Activated T-helper 2 cell treated with anti-CD3 and anti-CD28 coated beads, Interferon-gamma antibody, Interleukin-2, Interleukin-4, amounts not matched to agents 10 μg/mL and 5 μg/mL and 100 μg/mL, durations not matched to agents 14 hours and 24 hours and 36 hours (primary cell): ENCODE measurements at regions of chr20 and their contacts with region 1.

Region 1: DNA sequence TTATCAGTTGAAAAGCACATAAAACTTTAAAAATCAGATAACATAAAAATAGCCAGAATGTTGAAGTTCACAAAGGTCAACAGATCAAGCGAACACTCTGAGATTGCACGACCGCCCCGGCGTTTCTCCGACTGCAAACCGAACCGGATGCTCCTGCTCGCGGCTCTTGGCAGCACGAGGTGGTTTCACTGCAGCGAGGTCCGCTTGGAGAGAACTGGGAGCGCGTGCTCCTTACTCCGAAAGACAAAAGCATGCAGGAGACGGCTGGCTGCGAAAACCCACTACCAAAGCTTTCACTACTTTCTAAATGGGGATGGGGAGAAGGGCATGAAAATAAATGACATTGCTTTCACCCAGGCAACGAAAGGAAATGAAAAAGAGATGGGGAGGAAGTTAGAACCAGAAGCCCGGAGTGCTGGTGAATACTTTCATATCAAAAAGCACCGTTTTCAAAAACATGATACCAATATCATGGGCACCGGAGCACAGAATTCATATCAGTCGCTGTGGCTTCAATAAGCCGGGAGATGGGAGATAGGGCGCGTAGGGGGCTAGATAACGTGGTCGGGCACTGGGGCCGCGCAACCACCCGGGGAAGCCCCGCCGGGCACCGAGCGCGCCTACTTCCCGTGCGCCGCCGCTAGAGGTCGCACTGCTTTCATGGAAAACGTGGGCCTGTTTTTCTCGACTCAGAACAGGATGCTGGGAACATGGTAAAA is 8.3 kb upstream of the ANKRD60 start:
- DNase-seq: peak; percentile 78
- H3K4me3 Mint-ChIP-seq: peak overlapping the region; percentile 88
- H3K27ac Mint-ChIP-seq: peak overlapping the region; percentile 94
- H3K4me1 Mint-ChIP-seq: peaks cover 41% of the 10 kb centered on the region
- H3K27me3 Mint-ChIP-seq: no peaks in the 10 kb centered on the region

Region 2: DNA sequence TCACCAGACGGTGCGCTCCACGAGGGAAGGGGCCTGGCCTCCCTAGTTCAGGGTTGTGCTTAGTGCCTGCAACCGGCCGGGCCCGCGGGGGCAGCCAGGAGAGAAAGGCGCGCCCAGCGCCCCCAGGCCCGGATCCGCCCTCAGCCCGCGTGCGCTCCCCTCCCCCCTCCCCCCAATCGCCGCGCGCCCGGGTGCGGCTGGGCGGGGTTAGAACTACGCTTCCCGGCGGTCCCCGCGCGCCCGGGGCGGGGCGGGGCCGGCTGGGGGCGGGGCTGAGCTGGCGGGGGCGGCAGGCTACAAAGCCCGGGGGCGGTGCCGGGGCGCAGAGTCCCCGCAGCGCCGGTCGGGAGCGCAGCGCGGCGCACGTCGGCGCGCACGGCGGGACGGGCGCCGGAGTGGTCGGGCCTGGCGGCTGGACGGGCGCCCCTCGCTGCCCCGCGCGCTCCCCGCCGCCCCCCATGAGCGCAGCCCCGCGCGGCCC is 845.7 kb before region 1 on chr20 and contains the start of gene RBM38:
- intact Hi-C with region 1: loop called (anchors 10 kb)
- DNase-seq: peak; percentile 74
- H3K4me3 Mint-ChIP-seq: peak within 1 kb of the TSS; percentile 91
- H3K27ac Mint-ChIP-seq: peak within 1 kb of the TSS; percentile 98
- H3K4me1 Mint-ChIP-seq: peaks cover 30% of the 10 kb centered on the region
- H3K27me3 Mint-ChIP-seq: no peaks in the 10 kb centered on the region
- total RNA-seq, gene RBM38: 88.9 and 89.5 TPM in 2 replicates

Region 3: GRCh38 chr20:58286729-58287128 is 50.0 kb after region 1 on chr20:
- intact Hi-C with region 1: no loop called
- DNase-seq: no peak
- H3K4me3 Mint-ChIP-seq: no peak overlapping the region
- H3K27ac Mint-ChIP-seq: peak overlapping the region; percentile 54
- H3K4me1 Mint-ChIP-seq: peaks cover 25% of the 10 kb centered on the region
- H3K27me3 Mint-ChIP-seq: no peaks in the 10 kb centered on the region

Region 4: DNA sequence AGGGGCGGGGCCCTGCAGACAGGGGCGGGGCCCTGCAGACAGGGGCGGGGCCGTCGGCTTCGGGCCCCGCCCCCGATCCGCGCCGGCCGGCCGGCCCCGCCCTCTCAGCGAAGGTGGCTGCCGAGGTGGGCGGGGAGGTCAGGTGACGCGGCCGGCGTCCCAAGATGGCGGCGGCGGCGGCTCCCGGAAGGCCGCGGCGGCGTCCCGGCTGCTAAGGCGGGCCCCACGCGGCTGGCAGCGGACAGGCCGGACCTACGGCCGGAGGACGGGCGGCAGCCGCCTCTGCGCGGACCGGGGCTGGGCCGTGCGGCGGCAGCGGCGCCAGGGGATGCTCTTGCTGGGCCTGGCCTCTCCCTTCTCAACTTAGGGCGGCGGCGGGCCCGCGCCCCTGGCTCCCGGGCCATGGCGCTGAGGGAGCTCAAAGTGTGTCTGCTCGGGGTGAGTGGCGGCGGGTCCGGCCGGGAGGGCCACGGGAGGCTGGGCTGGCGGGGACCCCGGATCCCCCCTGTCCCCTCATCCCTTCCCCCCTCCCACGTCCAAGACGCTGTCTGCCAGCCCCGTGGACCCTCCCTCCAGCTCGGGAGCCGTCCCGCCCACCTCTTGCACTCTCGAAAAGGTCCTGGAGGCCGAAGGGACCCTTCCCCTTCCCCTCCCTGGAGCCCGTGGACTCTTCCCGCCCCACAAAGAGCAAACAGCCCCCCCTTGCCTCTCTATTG is 73.0 kb after region 1 on chr20 and contains the start of gene RAB22A:
- intact Hi-C with region 1: loop called (anchors 1 kb)
- DNase-seq: peak; percentile 76
- H3K4me3 Mint-ChIP-seq: peak within 1 kb of the TSS; percentile 92
- H3K27ac Mint-ChIP-seq: peak within 1 kb of the TSS; percentile 86
- H3K4me1 Mint-ChIP-seq: peaks cover 54% of the 10 kb centered on the region
- H3K27me3 Mint-ChIP-seq: no peaks in the 10 kb centered on the region
- total RNA-seq, gene RAB22A: 16.0 and 16.3 TPM in 2 replicates

Region 5: DNA sequence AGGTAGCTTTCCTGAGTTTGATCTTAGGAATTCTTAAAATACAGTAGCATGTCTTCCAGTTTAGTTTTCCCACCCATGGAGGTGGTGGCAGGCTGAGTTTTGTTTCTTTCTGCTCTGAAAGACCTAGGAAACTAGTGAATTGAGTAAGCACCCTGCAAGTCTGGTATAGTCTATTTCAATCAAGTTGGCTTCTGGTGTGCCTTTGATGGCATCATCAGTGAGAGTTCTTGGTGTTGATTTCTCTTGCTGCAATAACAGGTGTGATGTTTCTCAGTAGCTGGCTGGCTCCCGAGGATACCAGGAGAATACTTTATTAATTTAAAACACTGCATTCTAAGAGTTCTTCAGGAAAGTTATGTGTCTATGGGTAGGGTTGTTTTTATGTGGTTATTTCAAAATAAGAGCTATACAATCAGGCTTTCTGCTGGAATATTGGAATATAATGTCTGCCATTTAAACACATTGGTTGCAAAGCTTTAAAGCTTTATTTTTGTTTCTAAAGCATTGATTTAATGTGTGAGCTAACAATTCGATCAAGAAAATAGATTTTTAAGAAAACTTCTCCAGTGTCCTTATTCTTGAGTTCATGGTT is 171.3 kb after region 1 on chr20:
- intact Hi-C with region 1: loop called (anchors 5 kb)
- DNase-seq: no peak
- H3K4me3 Mint-ChIP-seq: no peak overlapping the region
- H3K27ac Mint-ChIP-seq: peak overlapping the region; percentile 64
- H3K4me1 Mint-ChIP-seq: peaks cover 32% of the 10 kb centered on the region
- H3K27me3 Mint-ChIP-seq: no peaks in the 10 kb centered on the region

Region 6: GRCh38 chr20:58692594-58693226 is 455.9 kb after region 1 on chr20 and contains the start of gene NPEPL1:
- intact Hi-C with region 1: no loop called
- DNase-seq: peak; percentile 54
- H3K4me3 Mint-ChIP-seq: peak within 1 kb of the TSS; percentile 78
- H3K27ac Mint-ChIP-seq: peak within 1 kb of the TSS; percentile 78
- H3K4me1 Mint-ChIP-seq: peaks cover 15% of the 10 kb centered on the region
- H3K27me3 Mint-ChIP-seq: no peaks in the 10 kb centered on the region
- total RNA-seq, gene NPEPL1: 27.5 and 29.4 TPM in 2 replicates

Region 7: DNA sequence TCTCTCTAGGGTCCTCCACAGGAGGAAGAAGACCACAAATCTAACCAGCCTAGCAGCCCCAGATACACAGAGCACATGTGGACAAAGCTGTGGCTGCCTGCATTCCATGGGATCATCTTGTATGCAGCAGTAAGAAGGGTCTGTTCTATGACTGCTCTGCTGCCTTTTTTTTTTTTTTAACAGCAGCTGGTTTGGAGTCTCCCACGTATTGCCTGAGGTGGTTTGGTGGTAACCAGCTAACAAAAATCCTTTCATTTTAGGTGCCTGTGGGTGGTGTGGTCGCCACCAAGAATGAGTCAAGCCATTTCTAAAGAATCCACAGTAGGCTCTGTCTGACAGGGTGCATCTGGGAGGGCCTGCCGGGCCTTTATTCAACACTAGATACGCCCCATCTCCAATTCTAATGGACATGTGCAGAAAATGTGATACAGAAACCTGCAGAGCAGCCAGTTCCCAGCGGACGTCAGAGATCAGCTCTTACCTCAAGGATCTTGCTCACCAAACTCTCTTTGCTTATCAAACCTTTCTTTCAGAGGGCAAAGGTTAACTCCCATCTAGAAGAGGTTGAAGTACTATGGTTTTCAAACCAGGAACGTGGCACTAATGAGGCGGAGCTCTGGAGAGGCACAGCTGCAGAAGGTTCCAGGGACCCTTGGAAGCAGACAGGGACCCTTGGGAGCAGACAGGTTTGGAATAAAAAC is 582.0 kb after region 1 on chr20:
- intact Hi-C with region 1: loop called (anchors 10 kb)
- DNase-seq: peak; percentile 55
- H3K4me3 Mint-ChIP-seq: no peak overlapping the region
- H3K27ac Mint-ChIP-seq: peak overlapping the region; percentile 40
- H3K4me1 Mint-ChIP-seq: peaks cover 15% of the 10 kb centered on the region
- H3K27me3 Mint-ChIP-seq: peaks cover 23% of the 10 kb centered on the region